ENCODE measurements at regions of chr4 and their contacts with region 1.

Region 1: DNA sequence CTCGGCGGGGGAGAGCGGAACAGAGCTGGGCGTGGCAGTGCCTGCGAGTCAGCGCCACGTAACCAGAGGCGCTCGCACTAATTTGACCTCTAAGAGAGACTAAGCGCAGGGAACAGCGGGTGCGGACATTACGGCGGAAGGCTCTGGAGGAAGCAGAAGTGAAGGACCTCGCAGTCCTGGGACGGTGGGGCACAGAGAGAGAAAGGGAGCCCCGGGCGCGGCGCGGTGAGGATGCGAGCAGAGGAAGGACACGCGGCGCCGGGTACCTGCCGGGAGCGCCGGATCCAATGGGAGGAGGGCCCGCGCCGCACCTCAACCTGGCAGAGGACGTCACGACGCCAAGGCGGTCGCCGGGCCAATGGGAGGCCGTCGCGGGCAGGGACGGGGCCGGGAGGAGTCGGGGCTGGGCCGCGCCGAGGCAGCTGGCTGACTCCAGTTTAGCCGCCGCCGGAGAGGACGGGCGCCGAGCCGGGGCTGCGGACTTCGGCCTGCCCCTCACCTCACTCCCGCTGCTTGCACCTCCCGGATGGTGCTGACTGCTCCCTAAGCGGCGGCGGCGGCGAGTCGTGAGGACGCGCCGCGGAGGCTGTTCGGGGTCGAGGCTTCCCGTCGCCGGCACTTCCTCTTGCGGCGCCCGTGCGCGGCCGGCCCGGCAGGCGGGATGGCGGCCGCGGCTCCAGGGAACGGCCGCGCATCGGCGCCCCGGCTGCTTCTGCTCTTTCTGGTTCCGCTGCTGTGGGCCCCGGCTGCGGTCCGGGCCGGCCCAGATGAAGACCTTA is at the start of gene TMEM165:
- DNase-seq: peak; percentile 76 to 96 (median 90)
- H3K4me3 ChIP-seq: peak within 1 kb of the TSS; percentile 66 to 100 (median 92)
- H3K27ac ChIP-seq: peak within 1 kb of the TSS; percentile 83 to 99 (median 97)
- H3K27me3 ChIP-seq: no peaks in the 10 kb centered on the region
- CTCF ChIP-seq: peak in 28 of 56 donors; percentile 2 to 45 (median 28)
- total RNA-seq, gene TMEM165: 53.1 to 690 (median 173) TPM

Region 2: GRCh38 chr4:55363691-55364351 is 31.9 kb before region 1 on chr4:
- intact Hi-C with region 1: loop called (anchors 1 to 2 kb)
- DNase-seq: peak in 9 of 10 donors; percentile 44 to 86 (median 74)
- H3K4me3 ChIP-seq: peak overlapping the region in 11 of 59 donors; percentile 1 to 31 (median 8)
- H3K27ac ChIP-seq: peak overlapping the region; percentile 68 to 100 (median 96)
- H3K27me3 ChIP-seq: no peaks in the 10 kb centered on the region
- CTCF ChIP-seq: peak in 2 of 56 donors; percentile 15 to 31

Region 3: GRCh38 chr4:55435141-55435841 is 39.6 kb after region 1 on chr4:
- intact Hi-C with region 1: no loop called
- DNase-seq: no peak
- H3K4me3 ChIP-seq: no peak overlapping the region
- H3K27ac ChIP-seq: peak overlapping the region in 48 of 59 donors; percentile 0 to 82 (median 36)
- H3K27me3 ChIP-seq: no peaks in the 10 kb centered on the region
- CTCF ChIP-seq: no peak

Region 4: DNA sequence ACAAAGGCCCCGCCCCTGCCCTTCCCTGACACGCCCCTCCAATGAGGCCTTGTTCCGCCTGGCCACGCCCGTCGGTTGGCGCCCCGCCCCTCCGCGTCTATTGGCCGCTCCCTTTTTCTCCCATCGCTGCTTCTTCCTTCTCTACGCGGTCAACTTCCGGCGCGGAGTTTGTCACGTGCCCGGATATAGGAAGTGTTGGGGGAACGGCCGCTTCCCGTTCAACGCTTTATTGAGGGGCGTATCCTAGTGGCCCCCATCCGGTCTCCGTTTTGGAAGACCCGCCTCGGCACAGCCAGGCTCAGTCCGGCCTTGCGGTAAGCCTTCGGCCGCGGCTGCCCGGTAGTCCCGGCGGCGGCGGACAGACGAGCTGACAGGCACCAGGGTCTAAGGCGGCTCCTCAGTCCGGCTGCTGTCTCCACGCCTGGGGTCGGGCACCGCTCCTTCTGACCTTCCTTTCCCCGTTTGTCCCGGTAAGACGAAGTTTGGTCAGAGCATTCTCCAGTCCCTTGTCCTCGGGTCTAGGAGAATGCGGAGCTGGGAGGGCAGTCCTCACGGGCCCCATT is 457.8 kb after region 1 on chr4 and contains the start of gene EXOC1:
- intact Hi-C with region 1: loop called in 1 of 2 experiments (anchors 10 kb)
- DNase-seq: peak; percentile 97 to 99 (median 98)
- H3K4me3 ChIP-seq: peak within 1 kb of the TSS; percentile 65 to 100 (median 93)
- H3K27ac ChIP-seq: peak within 1 kb of the TSS in 42 of 59 donors; percentile 2 to 85 (median 60)
- H3K27me3 ChIP-seq: peaks cover 0 to 12% (median 0%) of the 10 kb centered on the region in 45 donors
- CTCF ChIP-seq: peak in 19 of 56 donors; percentile 8 to 51 (median 28)
- total RNA-seq, gene EXOC1: 22.0 to 65.5 (median 49.2) TPM